ENCODE measurements at regions of chr7 and their contacts with region 1.

Region 1: DNA sequence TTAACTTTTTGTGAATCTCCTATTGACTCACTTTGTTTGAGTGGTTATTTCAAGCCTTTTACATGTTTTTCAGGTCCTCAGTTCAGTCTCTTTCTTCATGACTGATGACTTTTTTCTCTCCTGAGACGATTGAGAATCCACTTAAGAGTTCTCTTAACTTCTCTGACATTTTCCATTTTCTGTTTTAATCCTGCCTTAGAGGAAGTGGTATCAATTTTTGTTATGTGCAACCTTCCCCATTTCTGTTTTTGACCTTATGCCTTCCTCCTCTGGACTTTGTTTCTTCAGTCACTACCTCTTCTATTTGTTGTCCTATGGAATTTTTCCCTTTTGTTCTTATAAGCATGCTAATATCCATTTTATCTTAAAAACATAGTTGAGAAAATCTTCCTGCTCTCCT is 2.4 kb downstream of the PSMC2 start:
- DNase-seq: no peak
- ATAC-seq: no peak

Region 2: GRCh38 chr7:103314852-103315251 is 35.0 kb before region 1 on chr7:
- intact Hi-C with region 1: loop called in 1 of 2 experiments (anchors 5 kb)
- DNase-seq: no peak
- ATAC-seq: no peak

Measured in left cardiac atrium (tissue), 4 donors.